GM12878 (cell line): ENCODE measurements at regions of chr1 and their contacts with region 1.

Region 1: DNA sequence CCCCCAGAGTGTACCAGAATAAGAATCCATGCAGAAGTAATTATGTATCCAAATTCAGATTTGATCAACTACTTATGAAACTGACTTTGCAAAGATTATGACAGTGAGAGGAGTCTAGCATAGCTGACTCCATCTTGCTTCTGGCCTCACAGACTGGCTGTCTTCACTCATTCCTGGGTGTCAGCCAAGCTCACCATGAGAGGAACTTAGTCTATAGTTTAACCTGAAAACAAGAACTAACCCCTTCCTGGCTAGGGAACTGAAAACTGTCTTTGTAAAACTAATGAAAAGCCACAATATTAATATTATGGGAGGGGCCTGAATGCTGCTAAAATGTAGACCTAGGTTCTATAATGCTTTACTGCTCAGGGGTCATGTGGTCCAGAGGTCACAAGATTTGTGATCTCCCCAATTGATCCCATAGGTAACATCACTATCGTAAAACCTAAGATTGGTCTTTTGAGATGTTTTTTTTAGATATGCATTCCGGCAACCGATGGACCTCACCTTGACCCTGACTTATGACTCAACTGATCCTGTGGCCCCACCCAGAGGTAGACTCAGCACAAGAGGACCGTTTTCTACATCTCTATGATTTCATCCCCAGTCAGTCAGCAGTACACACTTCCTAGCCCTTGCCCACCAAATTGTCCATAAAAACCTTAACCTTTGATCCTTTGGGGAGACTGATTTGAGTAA is 55.2 kb downstream of the ATP1B1 start:
- DNase-seq: peak; percentile 34
- ATAC-seq: peak; percentile 95
- H3K4me3 ChIP-seq: no peak overlapping the region
- H3K27ac ChIP-seq: no peak overlapping the region; the same call in 1 of the 2 replicates
- H3K4me1 ChIP-seq: peaks cover 12% of the 10 kb centered on the region; the same call in 1 of the 2 replicates
- H3K27me3 ChIP-seq: no peaks in the 10 kb centered on the region
- CTCF ChIP-seq: peak in 1 of 3 experiments; percentile 5; a peak in 1 of 6 replicates
- EP300 ChIP-seq: no peak; a peak in 2 of 4 replicates
- POLR2A ChIP-seq: no peak
- RAD21 ChIP-seq: peak; percentile 66

Region 2: DNA sequence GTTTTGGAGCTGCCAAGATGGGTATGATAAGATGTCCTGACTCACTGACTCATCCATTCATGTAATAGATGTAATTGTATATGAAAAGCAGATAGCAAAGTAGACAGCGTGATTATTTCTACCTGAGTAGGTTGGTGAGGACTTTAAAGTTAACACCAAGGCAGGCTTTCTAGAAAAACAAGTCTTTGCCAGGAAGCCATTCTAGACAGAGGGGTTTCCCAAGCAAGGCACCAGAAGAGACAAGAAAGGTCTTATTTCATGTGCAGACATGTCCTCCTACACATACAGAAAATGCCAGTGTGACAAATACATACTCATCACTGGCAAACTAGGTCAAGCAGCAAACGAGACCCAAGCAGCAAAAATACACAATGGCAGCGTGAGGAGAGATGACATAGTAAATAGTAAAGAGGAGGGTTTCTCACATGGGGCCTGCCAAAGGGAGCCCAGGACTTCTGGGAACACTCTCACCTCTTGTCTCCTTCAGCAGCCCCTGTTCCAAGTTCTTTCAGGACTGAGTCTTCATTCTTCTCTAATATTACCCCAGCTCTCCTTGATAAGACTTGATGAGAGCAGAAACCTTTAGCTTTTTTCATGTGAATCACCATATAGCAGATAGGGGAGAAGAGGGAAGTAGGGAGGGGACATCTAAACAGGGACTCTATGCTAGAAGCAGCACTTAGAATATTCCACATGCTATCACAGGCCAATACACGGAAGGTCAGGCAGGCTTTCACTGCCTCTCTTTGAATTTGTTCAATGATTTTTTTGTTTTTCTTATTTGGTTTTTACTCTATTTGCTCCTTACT is 169.8 kb before region 1 on chr1:
- CTCF ChIA-PET with region 1: no interaction called
- POLR2A ChIA-PET with region 1: no interaction called
- RAD21 ChIA-PET with region 1: no interaction called
- SMC1A ChIA-PET with region 1: no interaction called
- in situ Hi-C with region 1: no loop called
- intact Hi-C with region 1: no loop called
- DNase-seq: peak; percentile 26
- ATAC-seq: peak; percentile 83
- H3K4me3 ChIP-seq: no peak overlapping the region
- H3K27ac ChIP-seq: peak overlapping the region; percentile 44
- H3K4me1 ChIP-seq: no peaks in the 10 kb centered on the region; the same call in 1 of the 2 replicates
- H3K27me3 ChIP-seq: no peaks in the 10 kb centered on the region
- CTCF ChIP-seq: no peak
- EP300 ChIP-seq: no peak
- POLR2A ChIP-seq: no peak
- RAD21 ChIP-seq: no peak

Region 3: DNA sequence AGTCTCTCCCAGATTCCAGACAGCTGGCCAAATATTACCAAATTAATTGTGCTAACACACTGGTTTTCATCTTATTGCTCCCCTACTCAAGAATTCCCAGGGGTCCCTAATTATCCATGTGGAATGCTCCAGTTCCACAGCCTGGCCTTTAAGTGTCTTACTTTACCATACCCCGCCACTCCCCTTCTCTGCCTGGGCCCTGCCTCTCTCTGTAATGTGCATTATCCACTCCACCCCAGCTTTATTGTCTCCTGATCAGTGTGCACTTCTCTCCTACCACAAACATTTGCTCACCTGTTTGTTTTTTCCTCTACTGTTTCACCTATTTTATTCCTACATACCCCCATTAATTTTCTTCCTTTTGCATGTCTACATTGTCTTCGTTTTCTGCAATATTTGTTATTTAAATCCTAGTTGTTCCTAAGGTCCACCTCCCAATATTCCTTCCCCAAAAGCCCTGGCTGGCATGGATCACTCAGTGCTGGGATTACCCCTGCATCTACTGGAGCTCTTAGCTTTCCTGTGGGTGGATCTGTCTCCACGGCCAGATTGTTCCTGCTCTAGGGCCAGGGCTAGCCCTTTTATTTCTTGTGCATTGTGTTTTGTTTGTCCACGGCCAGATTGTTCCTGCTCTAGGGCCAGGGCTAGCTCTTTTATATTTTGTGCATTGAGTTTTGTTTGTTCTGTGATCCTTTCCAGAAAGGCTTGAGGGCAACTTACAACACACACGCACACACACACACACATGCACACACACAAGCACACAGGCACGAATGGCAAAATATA is 88.5 kb before region 1 on chr1:
- CTCF ChIA-PET with region 1: no interaction called
- POLR2A ChIA-PET with region 1: no interaction called
- RAD21 ChIA-PET with region 1: no interaction called
- SMC1A ChIA-PET with region 1: no interaction called
- in situ Hi-C with region 1: no loop called
- intact Hi-C with region 1: no loop called
- DNase-seq: no peak
- ATAC-seq: no peak
- H3K4me3 ChIP-seq: no peak overlapping the region
- H3K27ac ChIP-seq: no peak overlapping the region
- H3K4me1 ChIP-seq: no peaks in the 10 kb centered on the region
- H3K27me3 ChIP-seq: no peaks in the 10 kb centered on the region
- CTCF ChIP-seq: no peak
- EP300 ChIP-seq: no peak
- POLR2A ChIP-seq: no peak
- RAD21 ChIP-seq: no peak

Region 4: GRCh38 chr1:169138866-169139670 is 22.6 kb before region 1 on chr1:
- CTCF ChIA-PET with region 1: interaction called, 10 read pairs
- POLR2A ChIA-PET with region 1: no interaction called
- RAD21 ChIA-PET with region 1: interaction called, 9 read pairs
- SMC1A ChIA-PET with region 1: interaction called, 6 read pairs
- in situ Hi-C with region 1: no loop called
- intact Hi-C with region 1: no loop called
- DNase-seq: peak; percentile 55
- ATAC-seq: peak; percentile 96
- H3K4me3 ChIP-seq: no peak overlapping the region
- H3K27ac ChIP-seq: no peak overlapping the region
- H3K4me1 ChIP-seq: peaks cover 3% of the 10 kb centered on the region; the same call in 1 of the 2 replicates
- H3K27me3 ChIP-seq: no peaks in the 10 kb centered on the region
- CTCF ChIP-seq: no peak
- EP300 ChIP-seq: peak; percentile 86 to 89
- POLR2A ChIP-seq: no peak
- RAD21 ChIP-seq: no peak

Region 5: GRCh38 chr1:169149555-169150286 is 11.9 kb before region 1 on chr1:
- CTCF ChIA-PET with region 1: interaction called, 5 read pairs
- POLR2A ChIA-PET with region 1: no interaction called
- RAD21 ChIA-PET with region 1: interaction called, 4 read pairs
- SMC1A ChIA-PET with region 1: interaction called, 13 read pairs
- in situ Hi-C with region 1: no loop called
- intact Hi-C with region 1: no loop called
- DNase-seq: no peak
- ATAC-seq: no peak
- H3K4me3 ChIP-seq: no peak overlapping the region
- H3K27ac ChIP-seq: no peak overlapping the region
- H3K4me1 ChIP-seq: no peaks in the 10 kb centered on the region
- H3K27me3 ChIP-seq: no peaks in the 10 kb centered on the region
- CTCF ChIP-seq: no peak
- EP300 ChIP-seq: no peak
- POLR2A ChIP-seq: no peak
- RAD21 ChIP-seq: no peak

Region 6: GRCh38 chr1:169175461-169175860 is 13.8 kb after region 1 on chr1:
- CTCF ChIA-PET with region 1: interaction called, 10 read pairs
- POLR2A ChIA-PET with region 1: no interaction called
- RAD21 ChIA-PET with region 1: no interaction called
- SMC1A ChIA-PET with region 1: interaction called, 14 read pairs
- in situ Hi-C with region 1: no loop called
- intact Hi-C with region 1: no loop called
- DNase-seq: no peak
- ATAC-seq: no peak
- H3K4me3 ChIP-seq: no peak overlapping the region
- H3K27ac ChIP-seq: no peak overlapping the region
- H3K4me1 ChIP-seq: no peaks in the 10 kb centered on the region
- H3K27me3 ChIP-seq: no peaks in the 10 kb centered on the region
- CTCF ChIP-seq: no peak
- EP300 ChIP-seq: no peak
- POLR2A ChIP-seq: no peak
- RAD21 ChIP-seq: no peak

Region 7: DNA sequence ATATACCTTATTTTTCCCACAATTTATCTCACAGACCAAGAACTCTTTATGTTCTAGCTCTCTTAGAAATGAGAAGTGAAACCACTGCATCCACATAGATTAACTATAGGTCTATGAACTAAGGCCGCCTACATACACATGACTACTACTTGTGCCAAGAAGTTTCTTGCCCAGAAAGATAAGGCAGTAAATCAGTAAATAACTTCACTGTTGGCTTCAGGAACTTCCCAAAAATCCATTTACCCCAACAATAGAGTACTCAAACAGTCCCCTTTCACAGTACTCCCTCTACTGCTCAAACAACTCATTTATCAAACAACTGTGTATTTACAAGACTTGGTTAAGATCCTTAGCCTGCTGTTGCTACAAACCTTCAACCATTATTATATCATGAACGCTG is 109.5 kb after region 1 on chr1:
- CTCF ChIA-PET with region 1: no interaction called
- POLR2A ChIA-PET with region 1: no interaction called
- RAD21 ChIA-PET with region 1: no interaction called
- SMC1A ChIA-PET with region 1: no interaction called
- in situ Hi-C with region 1: no loop called
- intact Hi-C with region 1: no loop called
- DNase-seq: no peak
- ATAC-seq: peak; percentile 85
- H3K4me3 ChIP-seq: no peak overlapping the region
- H3K27ac ChIP-seq: no peak overlapping the region
- H3K4me1 ChIP-seq: no peaks in the 10 kb centered on the region
- H3K27me3 ChIP-seq: no peaks in the 10 kb centered on the region
- CTCF ChIP-seq: no peak
- EP300 ChIP-seq: no peak
- POLR2A ChIP-seq: no peak
- RAD21 ChIP-seq: no peak